ENCODE measurements at regions of chr2 and their contacts with region 1.

Region 1: DNA sequence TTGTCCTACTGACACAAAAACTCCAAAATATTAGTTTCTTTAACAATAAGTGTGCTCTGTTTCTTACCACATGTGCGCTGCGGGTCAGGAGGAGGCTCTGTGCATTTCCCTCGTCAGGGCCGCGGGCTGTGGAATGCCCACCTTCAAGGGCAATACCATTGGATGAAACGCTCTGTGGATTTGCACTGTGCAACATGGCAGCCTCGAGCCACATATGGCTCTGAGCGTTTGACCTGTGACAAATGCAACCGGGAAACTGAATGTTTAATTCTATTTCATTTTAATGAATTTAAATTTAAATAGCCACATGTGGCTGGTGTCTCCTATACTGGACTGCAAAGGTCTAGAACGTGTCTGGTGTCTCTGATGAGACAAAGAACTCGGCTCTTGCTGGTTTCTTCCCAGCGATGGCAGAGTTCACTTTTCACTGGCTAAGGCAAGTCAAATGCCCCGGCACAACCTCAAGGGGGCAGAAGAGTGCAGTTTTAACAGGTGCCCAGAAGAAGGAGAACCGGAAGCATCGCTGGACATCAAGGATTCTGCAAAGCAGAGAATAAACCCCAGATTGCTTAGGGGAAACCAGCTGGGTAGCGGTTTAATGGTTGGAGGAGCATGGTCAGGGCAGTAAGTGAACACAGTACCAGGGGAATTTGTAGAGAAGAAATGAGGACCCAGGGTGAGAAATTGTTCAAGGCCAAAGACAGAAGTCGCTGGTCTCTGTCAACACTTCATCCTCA is 37.0 kb upstream of the TMEM18 start:
- DNase-seq: peak; percentile 21 to 79
- H3K4me3 ChIP-seq: no peak overlapping the region
- H3K4me1 ChIP-seq: no peaks in the 10 kb centered on the region
- H3K27me3 ChIP-seq: no peaks in the 10 kb centered on the region

Region 2: DNA sequence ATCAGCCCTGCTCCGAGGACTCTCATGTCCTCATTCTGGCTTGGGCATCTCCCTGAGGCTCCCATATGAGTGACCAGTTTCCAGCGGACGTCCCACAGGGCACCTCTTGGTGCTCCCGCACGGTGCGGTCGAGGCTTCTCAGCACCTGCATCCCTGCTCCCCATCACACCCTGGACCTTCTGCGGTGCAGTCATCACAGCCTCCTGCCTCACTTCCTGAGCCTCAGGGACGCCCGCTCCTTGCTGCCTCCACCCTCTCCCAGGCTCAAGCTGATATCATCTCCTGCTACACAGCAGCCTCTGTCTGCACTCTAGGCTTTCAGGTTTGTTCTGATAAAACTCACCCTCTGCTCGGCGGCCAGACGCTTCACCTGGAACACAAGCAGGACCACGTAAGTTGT is 222.0 kb before region 1 on chr2:
- in situ Hi-C with region 1: no loop called
- DNase-seq: no peak
- H3K4me3 ChIP-seq: no peak overlapping the region
- H3K4me1 ChIP-seq: no peaks in the 10 kb centered on the region
- H3K27me3 ChIP-seq: no peaks in the 10 kb centered on the region

Region 3: DNA sequence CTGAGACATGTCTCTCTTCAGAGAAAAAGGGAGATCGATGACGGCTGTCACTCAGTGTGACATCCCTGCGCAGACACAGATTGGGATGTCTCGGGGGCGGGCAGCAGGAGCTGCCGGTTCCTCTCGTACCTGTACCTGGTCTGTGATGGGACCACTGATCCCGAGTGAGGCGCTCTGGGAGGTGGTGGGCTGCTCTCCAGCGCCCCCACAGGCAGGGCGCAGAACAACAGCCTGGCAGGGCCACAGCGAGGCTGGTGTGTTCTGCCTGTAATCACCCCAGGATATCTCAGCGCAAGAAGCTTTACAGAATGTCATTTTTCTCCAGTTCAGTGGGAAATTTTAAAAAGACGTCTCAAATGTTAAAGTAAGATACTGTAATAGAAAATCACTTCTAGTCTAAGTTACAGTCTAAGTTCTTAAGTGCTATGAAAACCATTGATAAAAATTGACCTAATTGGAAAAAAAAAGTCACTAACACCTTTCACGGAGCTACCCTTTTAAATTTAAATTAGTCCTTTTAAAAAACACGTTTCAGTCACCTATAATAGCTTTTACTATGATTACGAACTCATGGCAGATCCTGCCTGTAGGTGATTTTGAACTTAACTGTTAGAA is 426.3 kb after region 1 on chr2:
- in situ Hi-C with region 1: loop called (anchors 25 kb)
- DNase-seq: peak; percentile 3 to 69
- H3K4me3 ChIP-seq: no peak overlapping the region
- H3K4me1 ChIP-seq: no peaks in the 10 kb centered on the region
- H3K27me3 ChIP-seq: no peaks in the 10 kb centered on the region

Region 4: GRCh38 chr2:1546023-1546591 is 831.9 kb after region 1 on chr2:
- in situ Hi-C with region 1: loop called (anchors 10 kb)
- DNase-seq: peak; percentile 52 to 71
- H3K4me3 ChIP-seq: no peak overlapping the region
- H3K4me1 ChIP-seq: no peaks in the 10 kb centered on the region; the same call in 1 of the 2 replicates
- H3K27me3 ChIP-seq: no peaks in the 10 kb centered on the region